Natural killer cell (primary cell): ENCODE measurements at regions of chr2 and their contacts with region 1.

Region 1: GRCh38 chr2:197705121-197705911 is at the start of gene MARS2:
- DNase-seq: peak; percentile 89 to 98
- ATAC-seq: peak; percentile 86 to 94 (median 89)
- H3K4me3 ChIP-seq: peak within 1 kb of the TSS; percentile 97
- H3K4me3 Mint-ChIP-seq: peak within 1 kb of the TSS; percentile 88
- H3K27ac ChIP-seq: peak within 1 kb of the TSS; percentile 81
- H3K27ac Mint-ChIP-seq: peak within 1 kb of the TSS; percentile 88 to 92
- H3K4me1 ChIP-seq: peaks cover 21% of the 10 kb centered on the region
- H3K4me1 Mint-ChIP-seq: peaks cover 52 to 53% of the 10 kb centered on the region in 2 donors
- H3K27me3 ChIP-seq: no peaks in the 10 kb centered on the region
- H3K27me3 Mint-ChIP-seq: peaks cover 9 to 25% of the 10 kb centered on the region in 2 donors
- CTCF ChIP-seq: no peak
- total RNA-seq, gene MARS2: 5.7 to 12.2 (median 11.8) TPM

Region 2: DNA sequence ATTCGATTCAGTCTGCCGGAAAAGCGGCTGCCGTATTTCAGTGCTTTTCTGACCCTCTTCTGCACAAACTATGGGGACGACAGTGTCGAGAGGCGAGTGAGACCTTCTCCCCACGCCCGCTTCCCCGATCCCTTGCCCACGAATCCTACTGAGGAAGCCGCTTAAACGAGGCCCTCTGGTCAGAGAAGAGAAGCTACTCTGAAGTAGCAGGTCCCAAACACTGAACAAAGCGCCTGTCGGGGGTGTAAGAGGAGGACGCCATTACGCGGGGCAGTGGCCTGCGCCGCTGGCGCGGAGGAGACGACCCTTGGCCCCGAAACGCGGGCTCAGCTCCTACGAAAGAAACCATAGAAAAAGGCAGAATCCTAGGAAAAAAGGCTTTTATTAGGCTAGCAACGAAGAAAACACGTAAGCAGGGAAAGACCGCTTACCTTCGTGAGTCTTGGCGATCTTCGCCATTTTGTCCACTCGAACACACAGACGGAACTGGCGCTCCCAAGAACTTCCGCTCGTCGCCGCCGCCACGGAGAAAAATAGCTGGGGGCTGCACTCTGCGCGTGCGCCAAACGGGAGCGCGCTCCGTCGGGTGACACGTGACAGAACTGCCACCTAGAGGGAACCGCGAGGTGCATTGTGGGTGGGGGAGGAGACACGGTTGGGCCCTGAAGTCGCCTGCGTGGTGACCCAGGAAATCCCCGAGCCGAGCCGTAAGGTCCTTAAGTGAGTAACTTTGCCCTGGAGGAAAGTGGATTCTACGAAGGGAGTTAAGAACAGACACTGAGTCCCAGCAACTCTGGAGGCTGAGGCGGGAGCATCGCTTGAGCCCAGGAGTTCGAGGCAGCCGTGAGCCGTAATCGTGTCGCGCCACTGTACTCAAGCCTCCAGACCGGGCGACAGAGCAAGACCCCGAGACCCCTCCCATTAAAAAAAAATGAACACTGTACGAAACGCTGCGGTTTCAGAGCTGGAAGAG is 270.5 kb before region 1 on chr2 and contains the start of gene SF3B1:
- intact Hi-C with region 1: loop called (anchors 2 kb)
- DNase-seq: peak; percentile 99 to 100
- ATAC-seq: peak; percentile 94 to 99 (median 97)
- H3K4me3 ChIP-seq: peak within 1 kb of the TSS; percentile 92
- H3K4me3 Mint-ChIP-seq: peak within 1 kb of the TSS; percentile 98
- H3K27ac ChIP-seq: peak within 1 kb of the TSS; percentile 97
- H3K27ac Mint-ChIP-seq: peak within 1 kb of the TSS; percentile 98 to 100
- H3K4me1 ChIP-seq: peaks cover 30% of the 10 kb centered on the region
- H3K4me1 Mint-ChIP-seq: peaks cover 60 to 64% of the 10 kb centered on the region in 2 donors
- H3K27me3 ChIP-seq: no peaks in the 10 kb centered on the region
- H3K27me3 Mint-ChIP-seq: no peaks in the 10 kb centered on the region
- CTCF ChIP-seq: no peak
- total RNA-seq, gene SF3B1: 387 to 472 (median 447) TPM

Region 3: GRCh38 chr2:197515739-197516392 is 189.4 kb before region 1 on chr2 and contains the start of gene MOB4:
- intact Hi-C with region 1: loop called (anchors 2 kb)
- DNase-seq: peak; percentile 97
- ATAC-seq: peak; percentile 89 to 97 (median 92)
- H3K4me3 ChIP-seq: peak within 1 kb of the TSS; percentile 64
- H3K4me3 Mint-ChIP-seq: peak within 1 kb of the TSS; percentile 92
- H3K27ac ChIP-seq: peak within 1 kb of the TSS; percentile 88
- H3K27ac Mint-ChIP-seq: peak within 1 kb of the TSS; percentile 90 to 97
- H3K4me1 ChIP-seq: peaks cover 20% of the 10 kb centered on the region
- H3K4me1 Mint-ChIP-seq: peaks cover 36 to 39% of the 10 kb centered on the region in 2 donors
- H3K27me3 ChIP-seq: no peaks in the 10 kb centered on the region
- H3K27me3 Mint-ChIP-seq: no peaks in the 10 kb centered on the region
- CTCF ChIP-seq: no peak
- total RNA-seq, gene MOB4: 27.1 to 40.0 (median 34.9) TPM

Region 4: DNA sequence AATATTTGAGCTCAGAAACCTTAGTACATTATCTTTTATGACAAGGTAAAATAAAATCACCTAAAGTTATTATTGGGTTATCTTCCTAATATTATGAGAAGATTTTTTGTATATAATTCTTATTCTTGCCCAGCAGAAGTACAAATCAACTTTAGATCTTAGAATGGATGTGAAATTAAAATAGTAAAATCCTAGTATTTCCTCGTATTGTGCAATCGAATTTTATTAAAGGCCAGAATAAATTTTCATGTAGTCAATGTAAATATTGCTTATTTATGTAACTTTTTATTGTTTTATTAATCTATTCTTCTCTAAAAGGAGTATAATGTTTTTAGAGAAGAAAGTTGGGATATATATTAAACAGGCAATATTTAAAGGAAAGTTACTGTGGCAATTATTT is 12.5 kb after region 1 on chr2:
- intact Hi-C with region 1: no loop called
- DNase-seq: no peak
- ATAC-seq: no peak
- H3K4me3 ChIP-seq: no peak overlapping the region
- H3K4me3 Mint-ChIP-seq: no peak overlapping the region
- H3K27ac ChIP-seq: no peak overlapping the region
- H3K27ac Mint-ChIP-seq: no peak overlapping the region
- H3K4me1 ChIP-seq: no peaks in the 10 kb centered on the region
- H3K4me1 Mint-ChIP-seq: peaks cover 4 to 5% of the 10 kb centered on the region in 2 donors
- H3K27me3 ChIP-seq: no peaks in the 10 kb centered on the region
- H3K27me3 Mint-ChIP-seq: no peaks in the 10 kb centered on the region
- CTCF ChIP-seq: no peak

Region 5: GRCh38 chr2:197777823-197778407 is 72.6 kb after region 1 on chr2:
- intact Hi-C with region 1: loop called (anchors 1 kb)
- DNase-seq: peak in 1 of 2 donors; percentile 64
- ATAC-seq: no peak
- H3K4me3 ChIP-seq: no peak overlapping the region
- H3K4me3 Mint-ChIP-seq: no peak overlapping the region
- H3K27ac ChIP-seq: no peak overlapping the region
- H3K27ac Mint-ChIP-seq: no peak overlapping the region
- H3K4me1 ChIP-seq: no peaks in the 10 kb centered on the region
- H3K4me1 Mint-ChIP-seq: no peaks in the 10 kb centered on the region
- H3K27me3 ChIP-seq: peaks cover 11% of the 10 kb centered on the region
- H3K27me3 Mint-ChIP-seq: peaks cover 16 to 25% of the 10 kb centered on the region in 2 donors
- CTCF ChIP-seq: peak; percentile 83

Region 6: DNA sequence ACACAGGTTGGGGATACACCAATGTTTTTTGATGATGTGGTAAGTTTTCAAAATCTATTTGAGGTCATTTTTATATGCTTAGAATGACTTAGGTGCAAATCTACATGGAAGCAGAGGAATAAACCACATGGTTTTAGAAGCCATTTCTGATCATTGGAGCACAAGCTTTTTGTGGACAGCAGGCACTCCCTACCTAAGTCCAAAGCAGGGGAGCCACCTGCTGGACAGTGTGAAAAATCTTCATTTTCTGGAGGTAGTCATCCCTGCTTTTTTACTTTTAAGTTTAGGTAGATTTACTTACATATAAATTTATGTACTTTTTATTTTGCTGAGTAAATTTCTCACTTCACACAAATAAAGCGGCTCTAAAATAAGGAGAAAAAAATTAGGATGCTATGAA is 422.3 kb after region 1 on chr2:
- intact Hi-C with region 1: loop called (anchors 5 kb)
- DNase-seq: peak in 1 of 2 donors; percentile 76
- ATAC-seq: no peak
- H3K4me3 ChIP-seq: no peak overlapping the region
- H3K4me3 Mint-ChIP-seq: no peak overlapping the region
- H3K27ac ChIP-seq: no peak overlapping the region
- H3K27ac Mint-ChIP-seq: no peak overlapping the region
- H3K4me1 ChIP-seq: no peaks in the 10 kb centered on the region
- H3K4me1 Mint-ChIP-seq: no peaks in the 10 kb centered on the region
- H3K27me3 ChIP-seq: no peaks in the 10 kb centered on the region
- H3K27me3 Mint-ChIP-seq: peaks cover 0 to 14% of the 10 kb centered on the region in 2 donors
- CTCF ChIP-seq: no peak

Region 7: GRCh38 chr2:198296665-198297308 is 591.5 kb after region 1 on chr2:
- intact Hi-C with region 1: loop called (anchors 2 kb)
- DNase-seq: peak; percentile 18 to 83
- ATAC-seq: peak; percentile 67 to 81 (median 75)
- H3K4me3 ChIP-seq: no peak overlapping the region
- H3K4me3 Mint-ChIP-seq: no peak overlapping the region
- H3K27ac ChIP-seq: no peak overlapping the region
- H3K27ac Mint-ChIP-seq: no peak overlapping the region
- H3K4me1 ChIP-seq: no peaks in the 10 kb centered on the region
- H3K4me1 Mint-ChIP-seq: peaks cover 0 to 6% of the 10 kb centered on the region in 2 donors
- H3K27me3 ChIP-seq: no peaks in the 10 kb centered on the region
- H3K27me3 Mint-ChIP-seq: peaks cover 9 to 14% of the 10 kb centered on the region in 2 donors
- CTCF ChIP-seq: peak; percentile 84